ENCODE measurements at regions of chr1 and their contacts with region 1.

Region 1: DNA sequence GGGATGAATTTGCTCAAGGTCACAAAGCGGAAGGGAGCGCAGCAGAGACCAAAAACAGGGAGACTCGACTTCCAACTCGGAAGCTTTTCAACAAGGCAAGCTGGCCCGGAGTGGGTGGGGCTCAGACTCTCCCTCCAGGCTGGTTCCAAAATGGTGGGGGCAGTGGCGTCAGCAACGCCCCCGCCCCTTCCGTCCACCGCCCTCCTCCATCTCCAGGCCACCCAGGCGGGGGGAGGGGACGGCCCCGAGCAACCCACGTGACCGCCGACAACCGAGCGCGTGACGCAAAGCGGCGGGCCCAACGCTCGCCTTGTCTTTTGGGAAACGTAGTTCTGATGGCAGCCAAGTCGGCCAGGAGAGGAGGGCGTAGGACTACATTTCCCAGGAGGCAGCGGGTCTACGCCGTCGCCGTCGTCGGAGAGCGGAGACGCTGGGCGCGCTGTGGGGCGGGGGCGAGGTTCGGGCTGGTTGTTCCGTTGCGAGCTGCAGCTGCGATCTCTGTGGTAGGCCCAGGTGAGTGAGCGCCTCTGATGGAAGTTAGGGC is at the start of gene THRAP3:
- DNase-seq: peak; percentile 99 to 100
- ATAC-seq: peak; percentile 89 to 95 (median 93)
- H3K4me3 ChIP-seq: peak within 1 kb of the TSS; percentile 94
- H3K27ac ChIP-seq: peak within 1 kb of the TSS; percentile 98
- H3K4me1 ChIP-seq: peaks cover 30% of the 10 kb centered on the region
- H3K27me3 ChIP-seq: no peaks in the 10 kb centered on the region
- CTCF ChIP-seq: no peak
- total RNA-seq, gene THRAP3: 96.6 to 159 (median 124) TPM

Region 2: GRCh38 chr1:36155408-36156328 is 68.4 kb before region 1 on chr1 and contains the start of gene MAP7D1:
- intact Hi-C with region 1: loop called in 1 of 2 experiments (anchors 5 kb)
- DNase-seq: peak; percentile 91 to 96
- ATAC-seq: peak; percentile 69 to 77 (median 75)
- H3K4me3 ChIP-seq: peak within 1 kb of the TSS; percentile 100
- H3K27ac ChIP-seq: peak within 1 kb of the TSS; percentile 100
- H3K4me1 ChIP-seq: peaks cover 51% of the 10 kb centered on the region
- H3K27me3 ChIP-seq: no peaks in the 10 kb centered on the region
- CTCF ChIP-seq: no peak
- total RNA-seq, gene MAP7D1: 209 to 230 (median 215) TPM